Psoas muscle (tissue), 8 donors: ENCODE measurements at regions of chr17 and their contacts with region 1.

Region 1: DNA sequence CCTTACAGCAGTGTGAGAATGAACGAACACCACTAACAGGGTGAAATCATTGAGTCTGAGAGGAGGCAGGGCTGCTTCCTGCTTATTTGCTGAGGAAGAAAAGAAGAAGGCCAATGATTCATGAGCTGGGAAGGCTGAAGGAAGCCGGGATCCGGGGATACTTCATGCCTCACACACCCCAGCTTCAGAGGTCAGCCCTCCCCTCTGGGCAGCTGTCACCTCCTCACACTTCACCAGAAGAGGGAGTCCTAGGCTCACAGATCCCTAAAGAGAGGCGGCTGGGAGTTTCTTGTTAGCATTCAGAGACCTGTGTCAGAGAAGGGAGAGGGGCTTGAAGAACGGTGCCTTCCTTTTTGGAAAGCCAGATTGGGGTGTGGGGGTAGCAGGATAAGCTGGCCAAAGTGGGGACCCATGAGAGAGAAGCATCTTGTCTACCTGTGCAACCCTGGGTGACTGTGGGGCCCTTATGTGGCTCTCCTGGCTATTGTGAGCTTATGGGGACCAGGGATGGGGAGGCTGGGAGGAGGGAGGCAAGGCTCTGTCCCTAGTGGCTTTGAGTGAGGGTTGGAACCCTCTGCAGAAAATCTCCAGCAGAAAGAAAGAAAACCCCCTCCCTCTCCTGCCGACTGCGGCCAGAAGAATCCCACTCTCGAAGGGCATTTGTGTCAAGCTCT is 94.6 kb downstream of the RGS9 start:
- DNase-seq: no peak
- ATAC-seq: peak; percentile 64 to 86 (median 74)
- H3K4me3 ChIP-seq: no peak overlapping the region
- H3K27ac ChIP-seq: no peak overlapping the region
- H3K4me1 ChIP-seq: no peaks in the 10 kb centered on the region
- H3K27me3 ChIP-seq: peaks cover 0 to 7% (median 2%) of the 10 kb centered on the region in 3 donors
- CTCF ChIP-seq: peak; percentile 58

Region 2: DNA sequence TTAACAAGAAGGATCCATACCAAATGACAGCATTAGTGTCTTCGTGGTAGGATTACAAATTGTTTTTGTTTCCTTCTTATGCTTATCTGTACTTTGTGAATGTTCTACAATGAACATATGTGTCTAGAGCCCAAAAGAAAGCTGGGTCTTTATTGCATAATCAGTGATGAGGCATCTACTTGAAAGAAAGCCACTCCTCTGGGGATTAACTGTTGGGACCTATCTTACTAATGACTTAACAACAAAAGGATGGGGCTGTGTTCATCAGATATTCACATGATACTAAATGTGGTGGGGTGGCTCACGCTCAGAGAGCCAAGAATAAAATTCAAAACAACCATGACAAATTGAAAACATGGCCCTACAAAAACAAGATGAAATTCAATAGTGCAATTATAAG is 65.6 kb after region 1 on chr17:
- intact Hi-C with region 1: no loop called
- DNase-seq: no peak
- ATAC-seq: peak in 3 of 4 donors; percentile 57 to 83 (median 74)
- H3K4me3 ChIP-seq: no peak overlapping the region
- H3K27ac ChIP-seq: no peak overlapping the region
- H3K4me1 ChIP-seq: peaks cover 3% of the 10 kb centered on the region
- H3K27me3 ChIP-seq: no peaks in the 10 kb centered on the region
- CTCF ChIP-seq: no peak

Region 3: DNA sequence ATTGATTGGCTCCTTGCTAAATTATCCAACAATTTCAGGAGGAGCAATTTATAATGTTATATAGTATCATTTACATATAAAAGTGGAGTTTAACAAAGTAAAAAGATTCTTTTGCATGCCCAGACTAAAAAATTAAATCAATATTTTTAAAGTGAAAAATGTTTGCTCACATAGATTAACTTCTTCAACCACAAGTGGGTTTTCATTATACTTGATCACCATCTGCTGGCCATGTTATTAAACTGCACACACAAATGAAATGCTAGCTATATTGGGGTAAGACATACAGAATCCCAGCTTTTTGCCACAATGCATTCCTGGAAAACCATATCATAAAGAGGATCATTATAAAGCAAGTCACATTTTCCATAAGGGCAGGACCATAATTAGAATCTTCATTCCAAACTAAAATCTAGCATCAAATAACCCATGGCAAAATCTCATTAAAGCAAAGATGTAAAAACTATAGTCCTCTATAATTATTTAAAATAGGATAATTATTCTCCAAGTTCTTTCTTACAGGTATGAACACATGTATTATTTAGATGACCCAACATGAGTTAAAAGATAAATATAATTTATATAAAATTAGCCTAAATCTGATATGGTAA is 933.8 kb after region 1 on chr17:
- intact Hi-C with region 1: loop called (anchors 5 to 10 kb)
- DNase-seq: no peak
- ATAC-seq: peak in 1 of 4 donors; percentile 72
- H3K4me3 ChIP-seq: no peak overlapping the region
- H3K27ac ChIP-seq: no peak overlapping the region
- H3K4me1 ChIP-seq: no peaks in the 10 kb centered on the region
- H3K27me3 ChIP-seq: no peaks in the 10 kb centered on the region
- CTCF ChIP-seq: peak; percentile 75